Sigmoid colon (tissue), 7 donors: ENCODE measurements at regions of chr3 and their contacts with region 1.

Region 1: DNA sequence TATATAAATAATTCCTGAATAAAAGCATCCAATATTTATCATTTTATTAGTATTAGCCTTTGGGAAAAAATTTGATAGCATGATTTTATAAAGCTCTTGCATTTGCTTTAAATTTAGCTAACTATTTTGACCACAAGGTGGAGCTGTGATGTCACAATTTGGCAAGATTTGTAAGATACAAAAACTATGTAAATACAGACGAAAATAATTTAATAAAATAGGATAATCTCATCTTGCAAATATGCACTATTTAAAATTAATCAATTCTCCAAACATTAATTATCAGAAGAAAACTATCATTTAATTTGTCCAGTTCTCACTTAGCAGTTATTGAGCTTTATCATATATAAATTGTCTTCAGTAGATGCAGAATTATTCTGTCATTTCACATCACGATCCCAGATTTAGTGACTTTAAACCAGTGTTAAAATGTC is 95.4 kb downstream of the PLOD2 start:
- DNase-seq: no peak
- H3K4me3 ChIP-seq: no peak overlapping the region
- H3K27ac ChIP-seq: no peak overlapping the region
- H3K4me1 ChIP-seq: peaks cover 0 to 23% (median 0%) of the 10 kb centered on the region in 4 donors
- H3K27me3 ChIP-seq: no peaks in the 10 kb centered on the region
- CTCF ChIP-seq: peak; percentile 33 to 75 (median 60)
- EP300 ChIP-seq: no peak
- POLR2A ChIP-seq: no peak

Region 2: DNA sequence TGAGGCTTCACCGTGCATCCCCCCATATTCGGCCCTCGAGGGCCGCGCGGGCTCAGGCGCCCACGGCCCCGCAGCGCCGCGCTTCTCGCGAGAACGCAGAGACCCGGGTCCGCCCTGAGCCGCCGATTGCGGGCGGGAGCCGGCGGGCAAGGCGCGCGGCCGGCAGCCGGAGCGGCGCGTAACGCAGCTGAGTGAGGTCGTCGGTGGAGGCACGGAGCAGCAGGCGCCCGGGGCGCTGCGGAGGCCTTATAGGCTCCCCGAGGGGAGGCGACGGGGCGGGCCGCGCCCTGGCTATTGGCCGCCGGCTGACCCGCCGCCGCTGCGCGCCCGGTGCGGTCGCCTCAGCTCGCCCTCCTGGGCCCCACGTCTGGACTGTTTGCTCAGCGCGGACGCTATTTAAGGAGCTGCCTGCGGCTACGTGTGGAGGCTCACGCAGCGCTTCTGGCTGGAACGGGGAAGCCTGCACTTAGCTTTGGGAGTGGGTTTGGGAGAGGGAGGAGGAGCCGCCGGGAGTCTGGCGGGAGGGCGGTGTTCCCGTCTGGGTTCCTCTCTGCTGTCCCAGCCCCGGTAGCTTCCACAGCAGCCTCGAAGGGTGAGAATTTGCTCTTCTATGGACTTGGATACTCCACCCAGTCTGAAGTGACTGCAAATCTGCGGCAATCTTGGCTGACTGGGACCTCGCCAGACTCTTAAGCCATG is 95.5 kb after region 1 on chr3 and contains the start of gene PLOD2:
- intact Hi-C with region 1: loop called (anchors 5 kb)
- DNase-seq: peak; percentile 91
- H3K4me3 ChIP-seq: peak within 1 kb of the TSS; percentile 72 to 91 (median 86)
- H3K27ac ChIP-seq: peak within 1 kb of the TSS; percentile 93 to 94 (median 93)
- H3K4me1 ChIP-seq: peaks cover 0 to 65% (median 46%) of the 10 kb centered on the region in 4 donors
- H3K27me3 ChIP-seq: no peaks in the 10 kb centered on the region
- CTCF ChIP-seq: no peak
- EP300 ChIP-seq: no peak
- POLR2A ChIP-seq: peak; percentile 25 to 35
- total RNA-seq, gene PLOD2: 63.3 to 79.9 (median 75.5) TPM

Region 3: DNA sequence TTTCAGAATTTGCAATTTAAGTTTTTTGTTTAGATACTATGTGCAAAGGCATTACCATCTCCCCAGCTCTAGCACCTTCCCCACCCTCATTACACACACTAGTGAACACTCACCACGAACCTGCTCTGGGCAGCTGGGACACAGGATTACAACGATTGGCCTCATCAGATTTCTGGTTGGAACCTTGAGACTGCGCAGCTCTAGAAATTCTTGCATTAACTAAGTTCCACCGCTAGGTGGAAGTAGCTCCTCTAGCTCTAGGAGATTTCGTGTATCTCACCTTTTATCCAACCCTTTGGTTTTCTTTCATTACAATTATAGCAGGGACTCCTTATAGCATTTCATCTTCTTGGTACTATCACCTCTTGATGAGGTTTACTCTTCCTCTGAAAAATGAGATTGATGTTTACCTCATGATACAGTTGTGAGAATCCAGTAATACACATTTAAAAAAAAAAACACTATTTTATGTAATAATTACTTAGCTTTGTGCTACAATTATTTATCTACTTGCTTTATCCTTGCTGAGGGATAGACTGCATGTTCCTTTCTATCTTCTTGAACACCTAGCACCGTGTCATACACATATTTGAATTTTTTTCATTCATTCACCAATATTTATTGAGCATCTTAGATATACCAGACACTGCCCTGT is 124.1 kb after region 1 on chr3:
- intact Hi-C with region 1: loop called (anchors 2 kb)
- DNase-seq: peak; percentile 63
- H3K4me3 ChIP-seq: no peak overlapping the region
- H3K27ac ChIP-seq: no peak overlapping the region
- H3K4me1 ChIP-seq: peaks cover 0 to 15% (median 7%) of the 10 kb centered on the region in 4 donors
- H3K27me3 ChIP-seq: no peaks in the 10 kb centered on the region
- CTCF ChIP-seq: peak; percentile 26 to 76 (median 67)
- EP300 ChIP-seq: no peak
- POLR2A ChIP-seq: no peak

Region 4: GRCh38 chr3:146326670-146327543 is 261.3 kb after region 1 on chr3:
- intact Hi-C with region 1: loop called (anchors 5 kb)
- DNase-seq: peak; percentile 70
- H3K4me3 ChIP-seq: no peak overlapping the region
- H3K27ac ChIP-seq: no peak overlapping the region
- H3K4me1 ChIP-seq: peaks cover 0 to 4% (median 0%) of the 10 kb centered on the region in 4 donors
- H3K27me3 ChIP-seq: no peaks in the 10 kb centered on the region
- CTCF ChIP-seq: peak; percentile 52 to 63 (median 58)
- EP300 ChIP-seq: no peak
- POLR2A ChIP-seq: no peak

Region 5: DNA sequence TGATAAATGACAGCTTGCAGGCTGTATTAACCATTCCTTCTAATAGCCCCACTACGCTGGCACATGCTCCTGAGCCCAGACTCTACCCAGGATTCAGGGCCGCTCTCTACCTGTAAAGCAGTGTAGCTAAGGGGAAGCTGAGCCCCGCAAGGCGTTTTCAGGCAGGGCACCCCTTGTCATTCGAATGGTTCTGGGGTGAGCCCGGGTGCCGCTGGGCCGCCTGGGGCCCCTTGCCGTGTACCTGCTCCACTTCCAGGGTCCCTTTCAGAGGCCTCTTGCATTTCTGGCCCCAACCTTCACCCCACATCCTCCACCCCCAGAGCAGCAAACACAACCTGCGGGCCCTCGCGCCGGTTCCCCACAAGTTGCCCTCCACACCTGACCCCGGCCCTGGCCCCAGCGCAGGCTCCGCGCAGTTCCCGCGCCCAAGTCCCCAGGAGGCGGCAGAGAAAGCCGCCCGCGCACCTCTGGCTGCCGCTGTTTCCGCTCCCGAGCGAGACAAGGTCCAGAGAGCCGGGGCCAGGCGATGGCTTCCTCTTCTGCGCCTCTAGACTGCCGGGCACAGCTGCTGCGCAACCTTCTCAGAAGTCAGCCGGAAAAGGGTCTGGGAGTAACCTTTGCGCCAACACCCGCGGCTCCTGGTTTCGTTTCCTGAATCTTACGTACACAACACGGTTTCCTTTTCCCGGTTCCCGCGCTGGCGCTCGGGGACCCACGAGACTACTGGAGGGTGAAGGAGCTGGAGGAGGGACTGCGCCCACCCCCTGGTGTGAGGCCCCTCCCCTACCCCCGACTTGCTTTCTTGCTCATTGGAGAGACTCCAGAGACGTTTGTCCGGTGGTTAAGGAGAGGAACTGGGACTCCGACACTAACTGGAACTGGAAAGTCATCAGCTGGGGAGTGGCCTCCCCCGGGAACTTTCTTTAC is 478.7 kb after region 1 on chr3 and contains the start of gene PLSCR1:
- intact Hi-C with region 1: loop called (anchors 10 kb)
- DNase-seq: peak; percentile 98
- H3K4me3 ChIP-seq: peak within 1 kb of the TSS; percentile 64 to 92 (median 85)
- H3K27ac ChIP-seq: peak within 1 kb of the TSS; percentile 89 to 98 (median 95)
- H3K4me1 ChIP-seq: peaks cover 0 to 39% (median 33%) of the 10 kb centered on the region in 4 donors
- H3K27me3 ChIP-seq: no peaks in the 10 kb centered on the region
- CTCF ChIP-seq: no peak
- EP300 ChIP-seq: peak in 3 of 4 donors; percentile 22 to 82 (median 81)
- POLR2A ChIP-seq: peak; percentile 75 to 87
- total RNA-seq, gene PLSCR1: 59.3 to 194 (median 101) TPM